Cardiac septum (tissue), 1 donor: ENCODE measurements at regions of chr5 and their contacts with region 1.

Region 1: DNA sequence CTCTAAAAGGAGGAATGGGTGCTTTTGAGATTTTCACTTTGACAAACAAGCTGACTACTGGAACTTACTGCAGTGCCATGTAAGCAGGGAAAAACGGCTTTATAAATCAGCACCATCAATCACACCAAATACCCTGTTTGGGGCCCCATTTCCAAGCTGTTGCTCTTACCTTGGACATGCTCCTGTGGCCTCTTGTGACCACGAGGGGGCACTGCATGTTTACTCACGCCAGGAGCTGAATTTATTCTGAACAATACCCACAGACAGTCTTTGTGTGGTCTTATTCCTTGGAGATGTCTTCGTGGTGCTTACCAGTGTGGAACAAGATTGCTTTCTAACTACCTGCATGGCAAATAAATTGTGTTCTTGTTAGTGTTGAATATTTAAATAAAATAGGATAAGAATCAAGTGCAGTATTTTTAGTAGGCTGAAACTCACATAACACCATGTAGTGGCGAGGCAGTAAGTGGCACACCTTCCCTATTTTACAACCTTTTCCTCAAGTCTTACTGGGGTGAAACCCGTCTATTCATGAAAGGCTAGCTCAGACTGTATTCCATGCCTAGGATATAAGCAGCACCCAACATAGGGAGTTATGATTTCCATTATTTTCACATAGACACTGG is 155.5 kb upstream of the NMUR2 start:
- DNase-seq: peak; percentile 81

Region 2: DNA sequence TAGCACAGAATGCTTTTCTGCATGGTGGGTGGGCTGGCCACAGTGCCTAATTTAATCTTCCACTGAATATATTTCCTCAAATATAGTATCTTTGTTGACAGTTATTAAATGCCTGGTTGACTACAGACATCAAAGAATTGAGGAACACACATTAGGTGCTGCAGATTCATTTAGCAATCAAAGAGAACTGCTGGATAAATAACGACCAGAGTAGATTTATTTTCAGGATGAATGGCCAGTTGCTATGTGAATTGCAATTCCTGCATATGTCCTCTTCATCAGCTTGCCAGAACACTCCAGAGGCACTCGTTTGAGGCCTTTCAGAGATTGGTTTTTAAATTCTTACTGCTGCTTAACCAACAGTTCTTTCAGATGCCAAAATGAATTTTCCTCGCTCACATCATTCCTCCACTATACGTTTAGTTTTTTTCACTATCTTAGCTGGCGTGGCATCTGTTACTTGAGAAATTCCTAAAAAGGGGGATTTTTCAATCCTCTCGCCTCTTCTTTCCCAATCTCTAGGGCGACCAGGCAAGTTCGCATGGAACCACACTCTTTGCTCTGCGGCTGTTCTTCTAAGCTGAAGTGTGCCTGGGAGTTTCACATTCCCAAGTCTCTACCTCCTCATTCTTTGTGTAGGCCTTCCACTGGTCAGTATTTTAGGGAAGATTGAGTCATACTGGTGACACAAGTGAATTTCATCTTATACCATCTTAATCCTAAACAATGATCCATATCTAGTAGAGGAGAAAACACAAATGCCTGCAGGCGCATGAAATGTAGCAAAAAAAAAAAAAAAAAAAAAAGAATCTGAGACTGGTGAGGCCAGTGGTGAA is 81.6 kb after region 1 on chr5:
- intact Hi-C with region 1: no loop called
- DNase-seq: no peak

Region 3: GRCh38 chr5:153147891-153148623 is 587.4 kb after region 1 on chr5:
- intact Hi-C with region 1: loop called (anchors 5 kb)
- DNase-seq: no peak